Naive thymus-derived CD4-positive, alpha-beta T cell (primary cell): ENCODE measurements at regions of chr21 and their contacts with region 1.

Region 1: GRCh38 chr21:15064576-15065391 is at the start of gene NRIP1:
- DNase-seq: peak; percentile 80 to 88 (median 82)
- ATAC-seq: peak; percentile 91
- H3K4me3 ChIP-seq: peak within 1 kb of the TSS; percentile 73
- H3K4me3 Mint-ChIP-seq: peak within 1 kb of the TSS; percentile 94 to 99 (median 96)
- H3K27ac ChIP-seq: peak within 1 kb of the TSS; percentile 85
- H3K27ac Mint-ChIP-seq: peak within 1 kb of the TSS; percentile 95 to 99 (median 98)
- H3K4me1 ChIP-seq: peaks cover 0 to 20% of the 10 kb centered on the region in 2 donors
- H3K4me1 Mint-ChIP-seq: peaks cover 25 to 53% (median 45%) of the 10 kb centered on the region in 7 donors
- H3K27me3 ChIP-seq: no peaks in the 10 kb centered on the region
- H3K27me3 Mint-ChIP-seq: peaks cover 0 to 33% (median 0%) of the 10 kb centered on the region in 5 donors
- total RNA-seq, gene NRIP1: 13.8 to 42.6 (median 35.8) TPM

Region 2: DNA sequence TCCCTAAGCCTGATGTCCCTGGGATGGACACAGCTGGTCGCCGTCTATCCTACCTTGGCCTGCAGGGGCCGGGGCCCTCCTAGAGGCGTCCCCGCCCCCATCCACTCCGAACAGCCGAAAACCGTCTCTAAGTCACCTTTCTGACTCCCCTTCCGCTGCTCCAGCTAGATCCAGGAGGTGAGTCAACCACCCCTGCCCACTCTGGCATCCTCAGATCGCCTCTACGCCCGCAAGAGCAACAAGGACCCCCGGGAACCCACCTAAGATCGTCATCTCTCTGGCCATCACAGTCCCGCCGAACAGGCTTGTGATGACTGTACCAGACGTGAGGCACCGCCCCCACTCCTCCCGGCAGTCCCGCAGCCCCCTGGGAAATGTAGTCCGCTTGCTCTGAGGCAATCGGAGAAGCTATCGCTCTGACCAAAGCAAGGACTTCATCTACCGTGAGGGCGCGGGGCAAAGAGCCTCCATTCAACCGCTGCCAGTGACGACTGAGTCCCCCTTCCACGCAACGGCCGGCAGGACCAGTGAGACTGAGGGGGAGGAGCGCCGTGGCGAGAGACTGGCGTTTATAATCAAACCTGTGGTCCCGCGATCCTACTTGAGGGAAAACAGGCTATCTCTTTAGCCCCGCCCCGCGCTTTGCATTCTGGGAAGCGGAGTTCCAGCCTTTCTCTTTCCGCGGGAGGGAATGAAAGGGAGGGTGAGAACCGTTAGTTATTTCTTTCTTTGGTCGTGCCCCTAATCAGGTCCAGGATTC is 681.8 kb before region 1 on chr21 and contains the start of gene HSPA13:
- CTCF ChIA-PET with region 1: no interaction called
- POLR2A ChIA-PET with region 1: interaction called, 5 read pairs
- intact Hi-C with region 1: loop called (anchors 1 kb)
- DNase-seq: peak; percentile 88 to 99 (median 99)
- ATAC-seq: peak; percentile 97
- H3K4me3 ChIP-seq: peak within 1 kb of the TSS; percentile 93
- H3K4me3 Mint-ChIP-seq: peak within 1 kb of the TSS; percentile 93 to 100 (median 100)
- H3K27ac ChIP-seq: peak within 1 kb of the TSS; percentile 91
- H3K27ac Mint-ChIP-seq: peak within 1 kb of the TSS; percentile 93 to 100 (median 98)
- H3K4me1 ChIP-seq: peaks cover 8 to 25% of the 10 kb centered on the region in 2 donors
- H3K4me1 Mint-ChIP-seq: peaks cover 13 to 44% (median 41%) of the 10 kb centered on the region in 7 donors
- H3K27me3 ChIP-seq: no peaks in the 10 kb centered on the region
- H3K27me3 Mint-ChIP-seq: peaks cover 0 to 2% (median 0%) of the 10 kb centered on the region in 5 donors
- total RNA-seq, gene HSPA13: 16.9 to 38.1 (median 26.7) TPM

Region 3: DNA sequence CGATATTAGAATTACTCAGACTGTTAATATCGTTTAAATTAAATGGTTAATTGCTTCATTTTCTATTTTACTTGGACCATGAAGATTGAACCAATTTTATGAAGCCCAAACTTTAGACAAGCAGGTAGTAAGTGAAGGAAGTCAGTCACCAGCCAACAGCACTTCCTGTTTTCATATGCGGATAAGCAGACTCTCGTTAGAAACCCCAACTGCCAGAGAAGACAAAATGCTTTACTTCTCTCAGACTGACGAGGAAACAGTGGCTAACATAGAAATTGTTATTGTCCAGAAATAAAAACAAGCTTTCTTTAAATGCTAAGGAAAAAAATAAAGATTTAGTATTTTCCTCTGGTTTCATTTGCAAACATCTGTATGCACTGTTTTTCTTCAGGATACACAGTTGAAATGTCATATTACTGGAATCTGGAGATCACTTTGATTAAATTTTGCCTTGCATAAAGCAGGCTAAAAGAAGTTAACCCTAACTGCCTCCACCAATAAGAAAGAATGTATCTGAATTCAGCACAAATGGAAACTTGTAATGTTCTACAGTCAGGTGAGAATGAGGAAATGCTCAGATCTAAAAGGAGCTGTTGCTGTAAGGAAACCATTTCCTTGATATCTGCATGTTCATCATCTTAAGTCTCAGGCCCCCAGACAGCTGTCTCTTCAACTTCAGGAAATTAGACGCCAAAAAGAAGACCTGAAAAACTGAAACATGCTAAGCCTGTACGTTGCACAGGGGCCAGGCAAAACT is 388.8 kb before region 1 on chr21:
- CTCF ChIA-PET with region 1: no interaction called
- POLR2A ChIA-PET with region 1: interaction called, 5 read pairs
- intact Hi-C with region 1: loop called in 1 of 2 experiments (anchors 1 kb)
- DNase-seq: peak in 7 of 9 donors; percentile 52 to 78 (median 70)
- ATAC-seq: peak; percentile 90
- H3K4me3 ChIP-seq: peak overlapping the region; percentile 19
- H3K4me3 Mint-ChIP-seq: peak overlapping the region; percentile 12 to 82 (median 78)
- H3K27ac ChIP-seq: peak overlapping the region; percentile 68
- H3K27ac Mint-ChIP-seq: peak overlapping the region; percentile 94 to 100 (median 98)
- H3K4me1 ChIP-seq: peaks cover 21 to 28% of the 10 kb centered on the region in 2 donors
- H3K4me1 Mint-ChIP-seq: peaks cover 32 to 68% (median 60%) of the 10 kb centered on the region in 7 donors
- H3K27me3 ChIP-seq: no peaks in the 10 kb centered on the region
- H3K27me3 Mint-ChIP-seq: no peaks in the 10 kb centered on the region

Region 4: GRCh38 chr21:14864211-14865021 is 200.4 kb before region 1 on chr21:
- CTCF ChIA-PET with region 1: no interaction called
- POLR2A ChIA-PET with region 1: no interaction called
- intact Hi-C with region 1: loop called (anchors 2 kb)
- DNase-seq: peak in 7 of 9 donors; percentile 13 to 31 (median 24)
- ATAC-seq: peak; percentile 72
- H3K4me3 ChIP-seq: no peak overlapping the region
- H3K4me3 Mint-ChIP-seq: no peak overlapping the region
- H3K27ac ChIP-seq: no peak overlapping the region
- H3K27ac Mint-ChIP-seq: no peak overlapping the region
- H3K4me1 ChIP-seq: no peaks in the 10 kb centered on the region
- H3K4me1 Mint-ChIP-seq: peaks cover 0 to 12% (median 3%) of the 10 kb centered on the region in 7 donors
- H3K27me3 ChIP-seq: no peaks in the 10 kb centered on the region
- H3K27me3 Mint-ChIP-seq: peaks cover 0 to 5% (median 0%) of the 10 kb centered on the region in 5 donors

Region 5: DNA sequence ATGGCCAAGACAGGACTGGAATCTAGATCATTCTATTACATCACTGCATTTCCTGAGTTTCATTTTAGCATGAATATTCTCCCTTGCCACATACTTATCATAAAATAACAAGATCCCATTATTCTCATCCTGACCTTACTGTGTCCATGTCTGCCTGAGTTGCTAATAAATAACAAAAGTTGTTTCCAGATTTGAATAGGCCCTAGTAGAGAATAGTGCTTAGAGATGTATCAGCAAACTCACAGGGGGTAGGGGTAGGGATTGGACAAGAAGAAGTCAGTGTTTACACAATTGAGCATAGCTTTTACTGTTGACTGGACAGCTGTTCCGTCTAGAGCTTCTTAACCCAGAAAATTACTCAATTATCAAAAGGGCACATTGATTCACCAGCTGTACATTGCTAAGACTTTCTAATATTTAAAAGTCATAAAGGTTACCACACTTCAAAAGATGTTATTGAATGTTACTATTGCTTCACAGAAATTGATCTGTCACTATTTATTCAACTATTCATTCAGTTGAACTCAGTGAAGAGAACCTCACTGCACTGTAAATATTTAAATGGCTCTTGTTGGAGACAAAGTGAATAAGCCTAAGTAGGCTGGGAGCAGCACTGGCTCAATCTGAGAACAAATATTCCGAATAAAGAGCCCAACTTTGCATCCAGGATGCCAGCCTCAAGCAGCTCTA is 121.8 kb before region 1 on chr21:
- CTCF ChIA-PET with region 1: no interaction called
- POLR2A ChIA-PET with region 1: no interaction called
- intact Hi-C with region 1: no loop called
- DNase-seq: no peak
- ATAC-seq: no peak
- H3K4me3 ChIP-seq: no peak overlapping the region
- H3K4me3 Mint-ChIP-seq: no peak overlapping the region
- H3K27ac ChIP-seq: no peak overlapping the region
- H3K27ac Mint-ChIP-seq: no peak overlapping the region
- H3K4me1 ChIP-seq: no peaks in the 10 kb centered on the region
- H3K4me1 Mint-ChIP-seq: no peaks in the 10 kb centered on the region
- H3K27me3 ChIP-seq: no peaks in the 10 kb centered on the region
- H3K27me3 Mint-ChIP-seq: peaks cover 0 to 11% (median 5%) of the 10 kb centered on the region in 5 donors

Region 6: DNA sequence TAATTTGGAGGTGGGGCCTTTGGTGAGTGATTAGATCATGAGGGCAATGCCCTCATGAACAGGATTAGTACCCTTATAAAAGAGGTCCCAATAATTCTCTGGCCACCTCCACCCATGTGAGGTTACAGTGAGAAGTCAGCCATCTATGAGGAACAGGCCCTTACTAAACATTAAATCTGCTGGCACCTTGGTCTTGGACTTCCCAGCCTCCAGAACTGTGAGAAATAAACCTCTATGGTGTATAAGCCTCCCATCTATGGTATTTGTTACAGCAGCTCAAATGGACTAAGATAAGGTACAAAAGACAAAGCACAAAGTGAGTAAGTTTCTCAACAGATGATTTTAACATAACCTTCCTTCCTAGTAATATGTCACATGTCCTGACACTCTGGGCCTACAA is 22.3 kb before region 1 on chr21:
- CTCF ChIA-PET with region 1: no interaction called
- POLR2A ChIA-PET with region 1: no interaction called
- intact Hi-C with region 1: no loop called
- DNase-seq: no peak
- ATAC-seq: no peak
- H3K4me3 ChIP-seq: no peak overlapping the region
- H3K4me3 Mint-ChIP-seq: peak overlapping the region in 2 of 10 donors; percentile 3 to 4
- H3K27ac ChIP-seq: no peak overlapping the region
- H3K27ac Mint-ChIP-seq: peak overlapping the region in 2 of 9 donors; percentile 13 to 33
- H3K4me1 ChIP-seq: no peaks in the 10 kb centered on the region
- H3K4me1 Mint-ChIP-seq: peaks cover 4 to 64% (median 41%) of the 10 kb centered on the region in 7 donors
- H3K27me3 ChIP-seq: no peaks in the 10 kb centered on the region
- H3K27me3 Mint-ChIP-seq: no peaks in the 10 kb centered on the region

Region 7: DNA sequence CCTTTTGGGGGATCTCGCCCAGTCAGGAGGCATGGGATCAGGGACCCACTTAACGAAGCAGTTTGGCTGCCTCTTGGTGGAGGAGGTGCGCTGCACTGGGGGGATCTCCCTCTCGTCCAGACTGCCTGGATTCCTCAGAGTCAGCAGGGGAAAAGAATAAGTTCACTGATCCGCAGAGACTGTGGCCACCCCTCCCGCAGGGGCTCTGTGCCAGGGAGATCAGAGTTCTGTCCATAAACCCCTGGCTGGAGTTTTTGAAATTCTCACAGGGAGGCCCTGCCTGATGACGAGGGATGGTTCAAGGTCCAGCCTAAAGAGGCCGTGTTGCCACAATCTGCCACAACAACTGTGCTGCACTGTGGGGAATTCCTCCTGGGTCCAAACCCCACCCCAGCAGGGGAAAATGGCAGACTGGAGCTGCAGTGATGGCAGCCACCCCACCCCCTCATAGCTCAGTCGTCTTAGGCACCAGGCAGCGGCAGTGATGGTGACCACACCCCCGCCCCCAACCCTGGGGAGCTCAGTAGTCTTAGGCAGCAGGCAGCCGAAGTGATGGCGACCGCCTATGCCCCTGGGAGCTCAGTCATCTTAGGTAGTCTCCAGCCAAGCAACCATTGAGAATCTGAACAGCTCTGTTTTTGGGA is 391.2 kb after region 1 on chr21:
- CTCF ChIA-PET with region 1: no interaction called
- POLR2A ChIA-PET with region 1: no interaction called
- intact Hi-C with region 1: no loop called
- DNase-seq: no peak
- ATAC-seq: no peak
- H3K4me3 ChIP-seq: no peak overlapping the region
- H3K4me3 Mint-ChIP-seq: no peak overlapping the region
- H3K27ac ChIP-seq: no peak overlapping the region
- H3K27ac Mint-ChIP-seq: no peak overlapping the region
- H3K4me1 ChIP-seq: no peaks in the 10 kb centered on the region
- H3K4me1 Mint-ChIP-seq: no peaks in the 10 kb centered on the region
- H3K27me3 ChIP-seq: no peaks in the 10 kb centered on the region
- H3K27me3 Mint-ChIP-seq: peaks cover 0 to 4% (median 0%) of the 10 kb centered on the region in 5 donors

Region 8: GRCh38 chr21:15483138-15483780 is 418.5 kb after region 1 on chr21:
- CTCF ChIA-PET with region 1: interaction called, 3 read pairs
- POLR2A ChIA-PET with region 1: interaction called, 4 read pairs
- intact Hi-C with region 1: loop called (anchors 1 kb)
- DNase-seq: peak; percentile 33 to 75 (median 69)
- ATAC-seq: peak; percentile 99
- H3K4me3 ChIP-seq: no peak overlapping the region
- H3K4me3 Mint-ChIP-seq: peak overlapping the region in 6 of 10 donors; percentile 18 to 59 (median 37)
- H3K27ac ChIP-seq: no peak overlapping the region
- H3K27ac Mint-ChIP-seq: peak overlapping the region in 2 of 9 donors; percentile 2 to 57
- H3K4me1 ChIP-seq: no peaks in the 10 kb centered on the region
- H3K4me1 Mint-ChIP-seq: peaks cover 3 to 37% (median 25%) of the 10 kb centered on the region in 7 donors
- H3K27me3 ChIP-seq: no peaks in the 10 kb centered on the region
- H3K27me3 Mint-ChIP-seq: peaks cover 0 to 3% (median 0%) of the 10 kb centered on the region in 5 donors

Region 9: DNA sequence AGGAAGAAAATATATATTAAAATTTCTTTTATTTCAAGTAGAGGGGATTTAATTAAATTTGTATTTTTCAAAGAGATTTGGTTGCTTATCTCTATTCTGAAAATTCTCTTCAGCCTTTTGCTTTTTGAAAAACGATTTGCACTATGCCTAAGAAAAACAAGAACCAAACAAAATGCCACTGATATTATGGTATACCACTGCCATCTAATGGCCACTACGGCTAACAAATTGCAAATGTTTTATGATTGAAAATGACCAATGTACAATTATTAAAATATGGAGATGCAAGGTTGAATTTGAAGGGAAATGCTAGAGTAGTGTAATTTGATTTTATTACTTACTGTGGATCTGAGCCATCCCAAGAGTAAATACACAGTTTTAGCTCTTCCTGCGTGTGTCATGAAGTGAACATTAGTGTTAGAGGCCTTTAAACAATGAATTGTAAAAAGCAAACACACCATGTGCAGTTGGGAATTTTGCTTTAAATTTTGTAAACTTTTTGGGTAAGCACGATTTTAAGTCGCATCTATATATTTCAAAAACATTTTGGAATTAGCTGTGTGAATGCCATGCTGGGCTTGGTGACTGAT is 527.6 kb after region 1 on chr21:
- CTCF ChIA-PET with region 1: no interaction called
- POLR2A ChIA-PET with region 1: no interaction called
- intact Hi-C with region 1: loop called (anchors 1 to 2 kb)
- DNase-seq: peak in 5 of 9 donors; percentile 23 to 41 (median 29)
- ATAC-seq: peak; percentile 68
- H3K4me3 ChIP-seq: no peak overlapping the region
- H3K4me3 Mint-ChIP-seq: no peak overlapping the region
- H3K27ac ChIP-seq: no peak overlapping the region
- H3K27ac Mint-ChIP-seq: no peak overlapping the region
- H3K4me1 ChIP-seq: no peaks in the 10 kb centered on the region
- H3K4me1 Mint-ChIP-seq: no peaks in the 10 kb centered on the region
- H3K27me3 ChIP-seq: no peaks in the 10 kb centered on the region
- H3K27me3 Mint-ChIP-seq: peaks cover 0 to 20% (median 5%) of the 10 kb centered on the region in 5 donors

Region 10: DNA sequence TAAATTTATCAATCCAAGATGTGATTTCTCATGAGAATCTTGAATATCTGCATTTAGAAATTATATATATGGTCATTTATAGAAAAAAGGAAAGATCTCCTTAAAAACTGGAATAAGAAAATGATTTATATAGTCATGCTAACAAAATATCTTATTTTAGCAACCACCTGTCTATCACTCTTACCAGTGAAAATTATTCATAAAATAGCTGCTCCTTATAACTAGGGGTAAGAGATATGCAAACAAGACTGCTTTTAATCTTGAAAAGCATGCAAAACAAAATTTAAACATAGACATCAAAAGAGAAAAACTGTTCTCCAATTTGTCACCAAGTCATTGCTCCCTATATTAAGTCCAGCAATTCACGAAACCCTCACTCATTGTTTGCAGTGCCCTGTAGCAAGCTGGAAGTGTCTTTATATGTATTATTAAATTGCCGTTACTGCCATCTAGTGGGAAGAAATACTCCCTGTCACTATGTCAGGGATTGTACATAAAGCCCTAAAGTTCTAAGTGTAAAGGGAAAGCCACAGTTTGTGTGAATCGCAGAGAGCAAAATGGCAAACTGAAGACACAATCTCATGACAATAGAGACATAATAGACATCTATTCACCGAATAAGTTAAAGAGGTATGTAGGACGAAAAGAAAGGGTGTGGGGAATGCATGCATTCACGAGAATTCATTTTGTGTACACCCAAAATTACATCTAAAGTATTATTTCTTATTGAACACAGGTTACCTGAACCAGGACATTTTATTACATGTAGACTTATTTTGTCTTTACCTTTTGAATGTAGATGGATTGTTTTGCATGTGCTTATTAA is 1265.5 kb after region 1 on chr21:
- CTCF ChIA-PET with region 1: no interaction called
- POLR2A ChIA-PET with region 1: no interaction called
- intact Hi-C with region 1: loop called in 1 of 2 experiments (anchors 1 kb)
- DNase-seq: peak in 5 of 9 donors; percentile 29 to 49 (median 34)
- ATAC-seq: peak; percentile 68
- H3K4me3 ChIP-seq: no peak overlapping the region
- H3K4me3 Mint-ChIP-seq: no peak overlapping the region
- H3K27ac ChIP-seq: no peak overlapping the region
- H3K27ac Mint-ChIP-seq: no peak overlapping the region
- H3K4me1 ChIP-seq: no peaks in the 10 kb centered on the region
- H3K4me1 Mint-ChIP-seq: peaks cover 0 to 2% (median 0%) of the 10 kb centered on the region in 7 donors
- H3K27me3 ChIP-seq: no peaks in the 10 kb centered on the region
- H3K27me3 Mint-ChIP-seq: no peaks in the 10 kb centered on the region